SK-N-SH (cell line): ENCODE measurements at regions of chr1 and their contacts with region 1.

Region 1: DNA sequence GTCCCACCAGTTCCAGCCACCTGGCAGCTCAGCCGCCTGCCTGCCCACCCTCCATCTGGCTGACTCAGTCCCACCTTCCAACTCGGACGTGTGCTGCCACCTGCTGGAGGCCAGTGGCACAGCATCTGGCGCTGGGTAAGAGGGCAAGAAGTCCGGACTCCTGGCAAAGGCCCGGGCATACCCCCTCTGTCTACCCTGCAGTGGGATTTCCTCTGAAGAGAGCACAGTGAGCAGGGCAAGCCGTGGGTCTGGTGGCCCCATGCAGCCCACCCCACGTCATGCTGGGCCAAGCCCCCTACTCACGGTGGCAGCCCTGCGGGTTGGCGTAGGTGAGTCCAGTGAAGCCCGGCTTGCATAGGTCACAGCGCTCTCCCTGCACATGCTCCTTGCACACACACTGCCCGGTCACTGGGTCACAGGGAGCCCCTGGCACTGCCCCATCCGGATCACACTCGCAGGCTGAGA is 24.5 kb downstream of the LAMB3 start:
- DNase-seq: peak; percentile 91
- H3K4me3 ChIP-seq: peak overlapping the region in 1 of 2 experiments; percentile 39; a peak in 1 of 4 replicates
- H3K27ac ChIP-seq: no peak overlapping the region
- H3K4me1 ChIP-seq: peaks cover 9 to 17% of the 10 kb centered on the region in 2 experiments; a peak in 3 of 4 replicates
- H3K27me3 ChIP-seq: no peaks in the 10 kb centered on the region
- CTCF ChIP-seq: peak; percentile 95
- EP300 ChIP-seq: no peak
- RAD21 ChIP-seq: peak; percentile 90

Region 2: GRCh38 chr1:209576798-209577197 is 51.0 kb before region 1 on chr1:
- CTCF ChIA-PET with region 1: interaction called, 81 read pairs
- POLR2A ChIA-PET with region 1: no interaction called
- DNase-seq: peak; percentile 84
- H3K4me3 ChIP-seq: no peak overlapping the region; a peak in 1 of 4 replicates
- H3K27ac ChIP-seq: no peak overlapping the region
- H3K4me1 ChIP-seq: peaks cover 3 to 7% of the 10 kb centered on the region in 2 experiments; a peak in 1 of 4 replicates
- H3K27me3 ChIP-seq: no peaks in the 10 kb centered on the region
- CTCF ChIP-seq: peak; percentile 96
- EP300 ChIP-seq: no peak
- RAD21 ChIP-seq: peak; percentile 88

Region 3: DNA sequence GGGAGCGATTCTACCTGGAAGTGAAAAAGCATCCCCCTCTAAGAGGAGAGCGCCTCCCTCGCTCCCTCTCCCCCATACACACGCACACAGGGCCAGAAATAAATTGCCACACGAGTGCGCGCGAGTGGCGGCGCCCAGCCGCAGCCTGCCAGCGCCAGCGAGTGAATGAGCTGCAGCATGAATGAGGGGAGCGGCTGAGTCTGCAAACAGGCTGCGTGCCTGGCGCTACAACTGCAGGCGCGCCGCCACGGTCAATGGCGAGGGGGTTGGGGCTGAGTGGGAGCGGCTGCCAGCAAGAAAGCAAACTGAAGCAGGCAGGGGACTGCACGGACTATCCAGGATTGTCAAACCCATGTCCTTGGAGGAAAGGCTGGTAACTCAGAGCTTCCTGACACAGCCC is 42.1 kb before region 1 on chr1:
- CTCF ChIA-PET with region 1: interaction called, 62 read pairs
- POLR2A ChIA-PET with region 1: no interaction called
- DNase-seq: peak; percentile 81
- H3K4me3 ChIP-seq: peak overlapping the region; percentile 31 to 80
- H3K27ac ChIP-seq: peak overlapping the region in 1 of 2 experiments; percentile 89; a peak in 3 of 4 replicates
- H3K4me1 ChIP-seq: peaks cover 18 to 52% of the 10 kb centered on the region in 2 experiments
- H3K27me3 ChIP-seq: no peaks in the 10 kb centered on the region
- CTCF ChIP-seq: peak; percentile 28; the same call in 1 of the 2 replicates
- EP300 ChIP-seq: no peak; a peak in 1 of 4 replicates
- RAD21 ChIP-seq: peak; percentile 19; the same call in 1 of the 2 replicates

Region 4: GRCh38 chr1:209601809-209602657 is 25.7 kb before region 1 on chr1:
- CTCF ChIA-PET with region 1: interaction called, 35 read pairs
- POLR2A ChIA-PET with region 1: no interaction called
- DNase-seq: peak; percentile 55
- H3K4me3 ChIP-seq: peak overlapping the region in 1 of 2 experiments; percentile 18; a peak in 1 of 4 replicates
- H3K27ac ChIP-seq: peak overlapping the region in 1 of 2 experiments; percentile 79; a peak in 1 of 4 replicates
- H3K4me1 ChIP-seq: peaks cover 0 to 27% of the 10 kb centered on the region in 2 experiments; a peak in 3 of 4 replicates
- H3K27me3 ChIP-seq: no peaks in the 10 kb centered on the region
- CTCF ChIP-seq: peak; percentile 71
- EP300 ChIP-seq: no peak
- RAD21 ChIP-seq: peak; percentile 77

Region 5: GRCh38 chr1:209607102-209607794 is 20.5 kb before region 1 on chr1:
- CTCF ChIA-PET with region 1: interaction called, 35 read pairs
- POLR2A ChIA-PET with region 1: no interaction called
- DNase-seq: no peak
- H3K4me3 ChIP-seq: no peak overlapping the region
- H3K27ac ChIP-seq: peak overlapping the region in 1 of 2 experiments; percentile 38; a peak in 2 of 4 replicates
- H3K4me1 ChIP-seq: peaks cover 0 to 8% of the 10 kb centered on the region in 2 experiments; a peak in 2 of 4 replicates
- H3K27me3 ChIP-seq: no peaks in the 10 kb centered on the region
- CTCF ChIP-seq: no peak
- EP300 ChIP-seq: no peak
- RAD21 ChIP-seq: no peak

Region 6: DNA sequence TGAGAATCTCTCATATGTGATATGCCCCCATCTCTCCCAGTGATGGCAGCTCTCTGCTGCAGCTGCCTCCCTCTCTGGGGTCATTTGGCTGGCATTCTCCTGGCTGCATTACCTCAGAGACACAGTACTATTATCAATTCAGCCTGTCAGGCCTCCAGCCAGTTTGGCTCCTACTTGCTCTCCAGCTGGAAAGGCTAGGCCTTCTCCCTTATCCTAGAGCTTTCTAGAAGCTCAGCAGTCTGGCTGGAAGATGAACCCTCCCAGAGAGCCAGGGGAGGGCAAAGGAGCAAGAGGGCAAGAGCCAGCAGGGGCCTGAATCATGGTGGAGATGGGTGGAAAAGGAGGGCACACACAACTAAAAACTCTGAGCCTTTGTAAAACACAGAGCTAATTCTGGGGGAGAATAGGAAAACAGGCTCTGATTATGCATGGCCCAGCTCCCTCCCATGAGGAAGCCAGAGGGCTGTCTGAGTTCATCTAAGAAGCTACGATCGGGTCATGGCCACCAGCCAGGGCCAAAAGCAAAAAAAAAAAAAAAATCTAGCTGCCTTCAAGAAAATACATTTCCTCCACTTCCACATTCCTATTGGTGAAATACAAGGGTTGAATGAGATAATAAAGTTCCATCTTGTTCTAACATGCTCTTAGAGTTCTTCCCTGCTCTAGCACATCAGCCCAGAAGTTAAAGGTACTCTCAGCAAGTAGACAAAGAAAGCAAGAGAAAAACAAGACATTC is 15.7 kb after region 1 on chr1:
- CTCF ChIA-PET with region 1: interaction called, 16 read pairs
- POLR2A ChIA-PET with region 1: no interaction called
- DNase-seq: no peak
- H3K4me3 ChIP-seq: no peak overlapping the region
- H3K27ac ChIP-seq: peak overlapping the region; percentile 71 to 86; a peak in 3 of 4 replicates
- H3K4me1 ChIP-seq: peaks cover 33 to 45% of the 10 kb centered on the region in 2 experiments
- H3K27me3 ChIP-seq: no peaks in the 10 kb centered on the region
- CTCF ChIP-seq: no peak
- EP300 ChIP-seq: 0 out of 4 replicates have a peak, but pooled peaks of 1 of the 2 experiments have one; percentile 11
- RAD21 ChIP-seq: no peak

Region 7: DNA sequence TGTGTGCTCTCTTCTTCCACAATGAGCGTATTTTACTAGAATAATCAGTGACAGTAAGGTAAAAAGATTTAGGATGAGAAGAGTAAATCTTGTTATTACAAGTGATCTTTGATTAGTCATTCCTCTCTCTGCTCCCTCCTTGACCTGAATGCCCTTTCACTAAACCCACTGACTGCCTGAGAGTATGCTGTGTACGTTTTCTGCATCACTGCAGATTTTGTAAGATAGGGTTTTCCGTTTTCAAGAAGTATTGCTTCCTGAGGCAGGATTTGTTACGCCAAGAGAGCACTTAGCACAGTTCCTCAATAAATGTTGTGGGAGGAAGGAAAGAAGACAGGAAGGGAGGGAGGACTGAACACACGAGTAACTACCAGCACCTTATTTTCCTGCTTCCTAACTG is 32.1 kb after region 1 on chr1:
- CTCF ChIA-PET with region 1: interaction called, 11 read pairs
- POLR2A ChIA-PET with region 1: no interaction called
- DNase-seq: no peak
- H3K4me3 ChIP-seq: no peak overlapping the region
- H3K27ac ChIP-seq: peak overlapping the region in 1 of 2 experiments; percentile 68; a peak in 2 of 4 replicates
- H3K4me1 ChIP-seq: peaks cover 0 to 17% of the 10 kb centered on the region in 2 experiments; a peak in 1 of 4 replicates
- H3K27me3 ChIP-seq: no peaks in the 10 kb centered on the region
- CTCF ChIP-seq: no peak
- EP300 ChIP-seq: peak in 1 of 2 experiments; percentile 49; a peak in 1 of 4 replicates
- RAD21 ChIP-seq: no peak

Region 8: DNA sequence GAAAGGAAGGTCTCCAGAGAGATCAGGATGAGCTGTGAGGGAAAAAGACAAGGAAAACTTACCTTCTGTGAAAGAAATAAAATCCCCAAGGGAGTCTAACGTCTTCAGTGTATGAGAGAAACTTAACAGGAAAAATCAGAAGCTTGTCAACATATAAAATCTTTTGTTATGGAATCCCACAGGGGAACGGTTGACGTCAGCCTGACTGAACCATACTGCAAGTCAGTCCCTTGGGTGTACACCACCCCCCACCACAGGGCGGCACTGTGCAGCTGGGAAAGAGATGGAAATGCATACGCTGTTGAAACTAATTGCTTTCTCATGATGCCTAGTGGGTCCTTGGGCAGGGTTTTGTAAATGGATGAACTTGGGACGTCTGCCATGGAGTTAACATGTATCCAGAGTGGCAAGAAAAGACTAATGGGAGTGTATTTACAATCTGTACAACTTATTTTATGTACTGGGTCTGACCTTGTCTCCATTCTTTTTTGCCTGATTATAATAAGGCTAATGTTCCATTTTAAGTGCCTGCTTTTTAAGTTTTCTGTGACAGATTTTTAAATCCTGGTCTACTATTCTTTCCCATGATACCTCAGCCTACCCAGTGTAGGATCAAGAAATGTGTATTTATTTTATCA is 222.7 kb after region 1 on chr1:
- CTCF ChIA-PET with region 1: no interaction called
- POLR2A ChIA-PET with region 1: no interaction called
- DNase-seq: peak; percentile 74
- H3K4me3 ChIP-seq: no peak overlapping the region
- H3K27ac ChIP-seq: peak overlapping the region in 1 of 2 experiments; percentile 80; a peak in 2 of 4 replicates
- H3K4me1 ChIP-seq: peaks cover 3 to 11% of the 10 kb centered on the region in 2 experiments; a peak in 3 of 4 replicates
- H3K27me3 ChIP-seq: no peaks in the 10 kb centered on the region
- CTCF ChIP-seq: peak; percentile 92
- EP300 ChIP-seq: no peak
- RAD21 ChIP-seq: peak; percentile 81